ENCODE measurements at regions of chr6 and their contacts with region 1.

Region 1: GRCh38 chr6:6577736-6578135 is 10.8 kb upstream of the LY86 start:
- DNase-seq: no peak

Region 2: DNA sequence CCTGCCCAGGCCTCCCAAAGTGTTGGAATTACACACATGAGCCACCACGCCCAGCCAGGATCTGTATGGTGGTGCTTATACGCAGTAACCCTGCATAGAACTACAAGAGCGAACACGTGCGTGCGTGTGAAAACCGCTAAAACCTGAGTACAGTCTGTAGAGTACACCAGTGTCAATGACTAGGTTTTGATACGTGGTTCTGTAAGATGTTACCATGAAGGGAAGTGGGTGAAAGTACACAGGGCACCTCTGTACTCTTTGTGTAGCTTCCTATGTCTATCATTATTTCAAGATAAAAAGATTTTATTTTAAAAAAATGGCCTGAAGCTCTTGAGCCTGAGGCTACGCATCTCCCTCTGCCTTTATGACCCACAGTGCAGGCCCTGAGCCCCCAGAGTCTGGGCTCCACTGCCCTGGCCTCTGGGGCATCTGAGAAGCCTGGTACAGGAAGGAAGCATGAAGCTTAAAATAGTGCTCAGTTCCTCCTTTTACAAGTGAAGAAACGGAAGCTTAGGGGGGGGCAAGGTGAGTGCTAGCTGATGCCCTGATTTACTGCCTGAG is 32.4 kb after region 1 on chr6:
- in situ Hi-C with region 1: loop called (anchors 5 kb)
- DNase-seq: no peak